ACHN (cell line): ENCODE measurements at regions of chr2 and their contacts with region 1.

Region 1: DNA sequence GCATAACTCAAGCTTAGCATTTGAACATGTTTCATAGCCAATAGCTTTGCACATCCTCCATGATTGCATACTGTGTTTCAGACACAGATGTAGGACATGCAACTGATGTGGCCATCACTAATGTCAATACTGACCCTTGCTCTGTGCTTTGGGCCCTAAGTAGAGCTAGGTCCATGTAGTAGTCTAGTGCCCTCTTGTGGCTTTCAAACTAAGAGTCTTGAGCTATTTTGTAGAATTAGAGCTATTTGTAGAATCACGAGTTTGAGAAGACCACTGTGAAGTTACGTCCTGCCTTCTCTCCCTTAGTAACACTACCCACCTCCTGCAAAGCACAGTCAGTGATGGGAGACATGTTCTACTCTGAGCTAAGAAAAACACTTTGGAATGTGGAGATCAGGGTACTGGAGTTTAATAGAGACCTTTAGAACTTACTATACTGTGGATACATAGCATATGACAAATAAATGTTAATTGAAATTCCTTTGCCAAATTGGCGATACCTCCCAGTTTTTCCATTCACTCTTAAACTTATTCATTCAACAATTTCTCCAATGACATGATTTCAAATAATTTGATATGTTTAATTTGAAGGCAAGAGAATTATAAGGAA is 306.5 kb upstream of the TNP1 start:
- DNase-seq: peak; percentile 64

Region 2: DNA sequence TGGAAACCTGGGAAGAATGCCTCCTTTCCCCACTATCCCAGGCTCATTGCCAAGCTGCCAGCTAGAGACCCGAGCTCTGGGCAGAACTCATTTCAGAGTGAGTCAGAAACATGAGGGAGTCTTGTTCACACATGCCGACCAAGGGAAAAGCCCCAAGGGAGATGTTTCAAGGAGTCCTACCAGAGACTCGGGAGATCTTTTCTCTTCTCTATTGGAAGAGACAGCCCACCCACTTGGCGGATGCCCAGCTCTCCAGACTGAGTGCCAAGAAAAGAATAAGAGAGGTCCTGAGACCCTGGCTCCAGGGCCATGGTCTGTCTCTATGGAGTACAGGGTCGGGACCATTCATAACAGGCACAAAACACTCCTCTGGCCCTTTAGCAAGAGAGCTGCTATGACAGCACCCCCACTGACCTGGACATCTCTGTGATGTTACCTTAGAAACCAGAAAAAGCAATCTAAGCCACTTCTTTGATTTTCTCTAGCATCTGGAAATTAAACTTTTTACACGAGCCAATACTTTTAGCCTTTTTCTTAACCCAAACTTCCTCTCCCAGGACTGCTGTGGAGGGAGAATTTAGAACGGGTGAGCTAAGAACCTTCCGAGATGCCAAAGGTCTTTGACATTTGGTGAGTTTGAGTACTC is 452.5 kb before region 1 on chr2:
- in situ Hi-C with region 1: loop called (anchors 25 kb)
- DNase-seq: peak; percentile 28

Region 3: DNA sequence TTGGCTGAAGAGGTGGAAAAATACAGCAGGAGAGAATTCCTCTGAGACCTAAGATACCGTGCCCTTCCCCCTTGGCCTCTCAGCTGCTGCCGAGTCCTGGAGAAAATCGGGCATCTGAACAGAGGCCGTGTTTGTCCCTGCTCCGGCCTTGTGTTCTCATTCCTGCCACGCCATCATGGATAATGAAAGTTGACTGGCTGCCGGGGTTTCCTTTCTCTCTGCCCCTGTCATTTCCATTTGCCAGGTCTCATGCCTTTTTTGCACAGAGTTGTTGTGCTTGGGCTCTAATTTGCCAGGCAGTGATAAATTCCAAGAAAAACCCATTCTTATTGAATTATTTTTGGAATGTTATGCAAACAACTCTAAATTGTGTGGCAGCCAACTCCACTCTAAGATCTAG is 190.4 kb after region 1 on chr2:
- in situ Hi-C with region 1: no loop called
- DNase-seq: no peak